ENCODE measurements at regions of chr18 and their contacts with region 1.

Region 1: DNA sequence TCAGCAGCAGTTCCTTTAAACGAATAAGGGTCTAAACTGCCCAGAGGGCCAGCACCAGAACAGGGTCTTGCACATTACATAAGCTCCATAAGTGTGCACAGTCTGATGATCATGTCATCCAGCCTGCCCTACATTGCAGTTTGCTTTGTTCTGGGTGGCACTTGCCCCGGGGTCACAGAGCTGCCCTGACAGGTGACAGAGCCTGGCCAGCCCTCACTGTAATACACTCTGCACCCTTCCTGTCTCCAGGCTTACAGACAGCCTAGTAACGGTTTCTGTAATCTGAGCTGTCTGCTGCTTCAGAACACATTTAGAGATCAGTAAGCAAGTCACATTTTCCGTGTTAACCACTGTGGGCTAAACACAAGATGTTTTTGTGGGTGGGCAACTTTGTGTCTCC is 213.3 kb downstream of the FAM210A start:
- DNase-seq: no peak
- ATAC-seq: peak in 1 of 4 experiments; percentile 36
- H3K4me3 ChIP-seq: no peak overlapping the region
- H3K4me3 Mint-ChIP-seq: peak overlapping the region in 1 of 3 donors; percentile 46
- H3K27ac ChIP-seq: no peak overlapping the region
- H3K27ac Mint-ChIP-seq: peak overlapping the region in 1 of 2 donors; percentile 30
- H3K4me1 ChIP-seq: peaks cover 9 to 26% of the 10 kb centered on the region in 2 experiments
- H3K4me1 Mint-ChIP-seq: peaks cover 41 to 53% (median 49%) of the 10 kb centered on the region in 3 donors
- H3K27me3 ChIP-seq: no peaks in the 10 kb centered on the region
- H3K27me3 Mint-ChIP-seq: no peaks in the 10 kb centered on the region

Region 2: DNA sequence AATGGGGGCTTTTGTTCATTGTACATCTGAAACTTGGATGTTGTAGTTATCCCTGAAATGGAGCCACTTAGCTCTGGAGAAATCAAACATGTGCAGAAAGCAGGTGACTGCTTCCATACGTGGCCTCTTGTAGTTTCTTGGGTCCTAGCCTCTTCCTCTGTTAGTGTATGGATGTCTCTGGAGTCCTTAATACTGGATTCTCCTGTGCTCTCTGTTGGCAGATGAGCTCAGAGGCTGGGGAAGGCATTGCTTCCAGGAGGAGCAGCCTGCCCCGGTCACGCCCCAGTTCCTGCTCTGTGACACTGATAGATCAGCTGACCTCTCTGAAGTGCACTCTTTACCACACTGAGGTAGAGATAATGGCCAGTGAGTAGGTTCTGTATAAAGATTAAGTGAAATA is 118.2 kb before region 1 on chr18:
- CTCF ChIA-PET with region 1: no interaction called
- POLR2A ChIA-PET with region 1: no interaction called
- DNase-seq: no peak
- ATAC-seq: no peak
- H3K4me3 ChIP-seq: no peak overlapping the region
- H3K4me3 Mint-ChIP-seq: no peak overlapping the region
- H3K27ac ChIP-seq: no peak overlapping the region
- H3K27ac Mint-ChIP-seq: peak overlapping the region in 1 of 2 donors; percentile 74
- H3K4me1 ChIP-seq: peaks cover 0 to 10% of the 10 kb centered on the region in 2 experiments
- H3K4me1 Mint-ChIP-seq: peaks cover 9 to 40% (median 31%) of the 10 kb centered on the region in 3 donors
- H3K27me3 ChIP-seq: no peaks in the 10 kb centered on the region
- H3K27me3 Mint-ChIP-seq: no peaks in the 10 kb centered on the region

Region 3: GRCh38 chr18:13455960-13456471 is 57.0 kb before region 1 on chr18:
- CTCF ChIA-PET with region 1: no interaction called
- POLR2A ChIA-PET with region 1: interaction called in 1 of 2 experiments, 14 read pairs
- DNase-seq: peak in 2 of 35 experiments; percentile 16 to 38
- ATAC-seq: peak; percentile 17 to 60 (median 52)
- H3K4me3 ChIP-seq: no peak overlapping the region
- H3K4me3 Mint-ChIP-seq: peak overlapping the region in 2 of 3 donors; percentile 40 to 42
- H3K27ac ChIP-seq: no peak overlapping the region
- H3K27ac Mint-ChIP-seq: peak overlapping the region; percentile 15 to 71
- H3K4me1 ChIP-seq: peaks cover 8 to 36% of the 10 kb centered on the region in 2 experiments
- H3K4me1 Mint-ChIP-seq: peaks cover 45 to 63% (median 55%) of the 10 kb centered on the region in 3 donors
- H3K27me3 ChIP-seq: peaks cover 0 to 2% of the 10 kb centered on the region in 2 experiments
- H3K27me3 Mint-ChIP-seq: no peaks in the 10 kb centered on the region

Region 4: GRCh38 chr18:13612196-13612997 is 99.4 kb after region 1 on chr18:
- CTCF ChIA-PET with region 1: no interaction called
- POLR2A ChIA-PET with region 1: interaction called in 1 of 2 experiments, 12 read pairs
- DNase-seq: peak; percentile 47 to 85 (median 63)
- ATAC-seq: peak; percentile 69 to 80 (median 74)
- H3K4me3 ChIP-seq: peak overlapping the region; percentile 38 to 67
- H3K4me3 Mint-ChIP-seq: peak overlapping the region; percentile 74 to 96 (median 84)
- H3K27ac ChIP-seq: peak overlapping the region; percentile 44
- H3K27ac Mint-ChIP-seq: peak overlapping the region; percentile 81 to 91
- H3K4me1 ChIP-seq: peaks cover 52 to 86% of the 10 kb centered on the region in 2 experiments
- H3K4me1 Mint-ChIP-seq: peaks cover 81 to 94% (median 85%) of the 10 kb centered on the region in 3 donors
- H3K27me3 ChIP-seq: peaks cover 0 to 6% of the 10 kb centered on the region in 2 experiments
- H3K27me3 Mint-ChIP-seq: no peaks in the 10 kb centered on the region

Measured in T-cell (primary cell).